A549 (cell line): ENCODE measurements at regions of chr19 and their contacts with region 1.

Region 1: GRCh38 chr19:5803752-5804515 is 933 bp upstream of the NRTN start:
- DNase-seq: peak; percentile 83 to 87
- ATAC-seq: peak; percentile 85 to 96
- H3K4me3 ChIP-seq: peak overlapping the region; percentile 43; the same call in 2 of the 3 replicates
- H3K27ac ChIP-seq: peak overlapping the region; percentile 51 to 84; a peak in 5 of 6 replicates
- H3K4me1 ChIP-seq: peaks cover 17% of the 10 kb centered on the region; the same call in 2 of the 3 replicates
- CTCF ChIP-seq: peak; percentile 91
- EP300 ChIP-seq: no peak
- POLR2A ChIP-seq: no peak
- RAD21 ChIP-seq: peak; percentile 78 to 92

Region 2: DNA sequence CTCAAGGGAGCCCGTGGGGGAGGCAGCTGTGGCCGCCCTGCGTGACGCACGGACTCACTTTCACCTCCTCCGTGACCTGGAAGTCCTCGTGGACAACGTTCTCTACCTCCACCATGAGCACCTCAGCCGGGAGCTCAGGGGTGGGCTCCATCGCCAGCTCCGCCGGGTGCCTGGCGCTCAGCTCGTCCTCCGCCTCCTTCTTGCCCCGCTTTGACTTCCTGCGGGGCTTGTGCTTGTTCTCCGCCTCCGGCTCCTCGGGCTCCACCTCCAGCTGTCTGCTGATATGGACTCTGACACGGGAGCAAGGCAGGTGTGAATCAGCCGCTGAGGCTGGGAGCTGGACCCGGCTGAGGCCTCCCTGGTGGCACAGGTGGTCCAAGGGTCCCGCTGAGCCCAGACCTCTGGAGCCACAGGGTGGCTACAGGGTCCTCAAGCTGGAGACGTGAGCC is 92.2 kb before region 1 on chr19:
- CTCF ChIA-PET with region 1: no interaction called
- POLR2A ChIA-PET with region 1: no interaction called
- DNase-seq: no peak
- ATAC-seq: no peak
- H3K4me3 ChIP-seq: no peak overlapping the region
- H3K27ac ChIP-seq: no peak overlapping the region
- H3K4me1 ChIP-seq: no peaks in the 10 kb centered on the region
- CTCF ChIP-seq: no peak
- EP300 ChIP-seq: no peak
- POLR2A ChIP-seq: no peak
- RAD21 ChIP-seq: no peak

Region 3: GRCh38 chr19:5775668-5776309 is 28.1 kb before region 1 on chr19:
- CTCF ChIA-PET with region 1: interaction called, 26 read pairs
- POLR2A ChIA-PET with region 1: no interaction called
- DNase-seq: peak in 1 of 2 experiments; percentile 37
- ATAC-seq: peak; percentile 18 to 49; a peak in 1 of 6 replicates
- H3K4me3 ChIP-seq: no peak overlapping the region
- H3K27ac ChIP-seq: no peak overlapping the region; a peak in 1 of 6 replicates
- H3K4me1 ChIP-seq: peaks cover 5% of the 10 kb centered on the region; the same call in 1 of the 3 replicates
- CTCF ChIP-seq: no peak
- EP300 ChIP-seq: no peak
- POLR2A ChIP-seq: no peak
- RAD21 ChIP-seq: no peak

Region 4: GRCh38 chr19:5790573-5791520 is 13.1 kb before region 1 on chr19 and contains the start of gene DUS3L:
- CTCF ChIA-PET with region 1: interaction called, 33 read pairs
- POLR2A ChIA-PET with region 1: no interaction called
- DNase-seq: peak; percentile 88 to 98
- ATAC-seq: peak; percentile 95 to 96
- H3K4me3 ChIP-seq: peak within 1 kb of the TSS; percentile 97
- H3K27ac ChIP-seq: peak within 1 kb of the TSS; percentile 99 to 100
- H3K4me1 ChIP-seq: peaks cover 5% of the 10 kb centered on the region; the same call in 2 of the 3 replicates
- CTCF ChIP-seq: no peak
- EP300 ChIP-seq: no peak
- POLR2A ChIP-seq: peak; percentile 44
- RAD21 ChIP-seq: no peak
- polyA plus RNA-seq, gene DUS3L: 15.5 and 16.3 TPM in 2 replicates

Region 5: GRCh38 chr19:5827891-5828660 is 24.1 kb after region 1 on chr19:
- CTCF ChIA-PET with region 1: interaction called, 74 read pairs
- POLR2A ChIA-PET with region 1: interaction called, 22 read pairs
- DNase-seq: peak; percentile 89 to 93
- ATAC-seq: peak; percentile 73 to 81
- H3K4me3 ChIP-seq: peak overlapping the region; percentile 64
- H3K27ac ChIP-seq: peak overlapping the region; percentile 91 to 98
- H3K4me1 ChIP-seq: peaks cover 19% of the 10 kb centered on the region
- CTCF ChIP-seq: no peak
- EP300 ChIP-seq: no peak
- POLR2A ChIP-seq: peak; percentile 96
- RAD21 ChIP-seq: no peak

Region 6: DNA sequence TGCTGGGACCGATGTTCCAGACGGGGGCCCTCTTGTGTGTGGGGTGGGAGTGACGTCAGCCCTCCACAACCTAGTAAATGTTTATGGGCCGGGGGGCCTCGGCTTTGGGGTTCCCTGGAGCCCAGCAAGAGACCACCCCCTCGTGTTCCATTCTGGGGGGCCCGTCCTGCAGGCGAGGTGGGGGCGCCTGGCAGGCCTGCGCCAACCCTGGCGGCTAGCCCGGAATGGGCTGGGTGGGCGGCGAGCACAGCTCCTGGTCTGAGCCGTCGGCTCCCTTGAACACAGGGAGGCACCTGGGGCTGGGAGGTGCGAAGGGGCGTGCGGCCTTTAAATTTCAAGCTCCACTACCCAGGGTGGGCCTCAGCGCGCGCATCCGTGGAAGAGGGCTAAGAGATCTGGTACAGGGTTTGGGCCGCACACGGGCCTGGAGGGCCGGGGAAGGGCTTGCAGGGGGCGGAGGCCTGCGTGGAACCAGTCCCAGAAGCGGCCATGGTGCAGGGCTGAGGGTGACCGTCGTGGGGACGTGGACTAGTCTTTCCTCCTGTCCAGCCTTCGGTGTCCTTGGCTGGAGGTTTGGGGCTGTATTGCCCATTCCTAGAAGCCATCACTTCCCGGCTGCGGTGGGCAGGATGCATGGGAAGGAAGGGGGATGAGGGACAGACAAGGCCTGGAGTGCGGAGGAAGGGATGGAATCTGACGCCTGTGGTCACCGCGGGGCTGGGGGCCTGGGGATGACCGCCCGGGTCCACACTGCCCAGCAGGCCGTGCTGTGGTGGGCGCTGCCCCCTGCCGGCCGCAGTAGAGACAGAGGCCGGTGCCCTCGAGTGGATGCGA is 88.2 kb after region 1 on chr19:
- CTCF ChIA-PET with region 1: interaction called, 56 read pairs
- POLR2A ChIA-PET with region 1: no interaction called
- DNase-seq: peak; percentile 33 to 46
- ATAC-seq: peak; percentile 69 to 89
- H3K4me3 ChIP-seq: no peak overlapping the region
- H3K27ac ChIP-seq: peak overlapping the region in 1 of 2 experiments; percentile 50; a peak in 2 of 6 replicates
- H3K4me1 ChIP-seq: 0 out of 3 replicates have a peak, but pooled peaks cover 3% of the 10 kb centered on the region
- CTCF ChIP-seq: peak; percentile 64
- EP300 ChIP-seq: no peak
- POLR2A ChIP-seq: no peak
- RAD21 ChIP-seq: peak; percentile 72 to 80

Region 7: DNA sequence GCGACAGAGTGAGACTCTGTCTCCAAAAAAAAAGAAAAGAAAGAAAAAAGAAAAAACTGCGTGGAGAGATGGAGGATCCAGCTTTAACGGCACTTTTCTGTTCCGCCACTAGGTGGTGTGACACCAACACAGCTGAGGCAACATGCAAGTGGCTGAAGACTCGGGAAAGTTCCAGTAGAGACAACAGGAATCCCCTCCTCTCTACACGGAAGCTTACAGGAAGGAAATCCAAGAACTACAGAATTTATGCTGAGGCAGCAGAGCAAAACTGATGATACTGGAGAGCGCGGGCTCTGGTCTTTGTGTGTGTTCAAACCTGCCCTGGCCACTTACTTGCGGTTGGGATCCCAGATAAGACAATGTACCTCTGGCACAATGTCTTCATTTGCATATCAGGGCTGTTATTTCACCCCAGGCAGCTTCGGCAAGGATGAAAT is 164.1 kb after region 1 on chr19:
- CTCF ChIA-PET with region 1: interaction called, 12 read pairs
- POLR2A ChIA-PET with region 1: no interaction called
- DNase-seq: peak; percentile 68 to 74
- ATAC-seq: peak; percentile 85 to 94
- H3K4me3 ChIP-seq: no peak overlapping the region
- H3K27ac ChIP-seq: peak overlapping the region in 1 of 2 experiments; percentile 52; a peak in 1 of 6 replicates
- H3K4me1 ChIP-seq: peaks cover 4% of the 10 kb centered on the region; the same call in 2 of the 3 replicates
- CTCF ChIP-seq: peak; percentile 63
- EP300 ChIP-seq: no peak
- POLR2A ChIP-seq: no peak
- RAD21 ChIP-seq: peak; percentile 25 to 27; a peak in 1 of 5 replicates